Activated CD4-positive, alpha-beta T cell treated with anti-CD3 and anti-CD28 coated beads for 36 hours (primary cell): ENCODE measurements at regions of chr2 and their contacts with region 1.

Region 1: GRCh38 chr2:101998896-101999789 is 7.4 kb downstream of the IL1R2 start:
- DNase-seq: peak; percentile 69
- ATAC-seq: peak; percentile 70
- H3K4me3 Mint-ChIP-seq: peak overlapping the region; percentile 64
- H3K27ac Mint-ChIP-seq: peak overlapping the region; percentile 90
- H3K4me1 Mint-ChIP-seq: peaks cover 40% of the 10 kb centered on the region
- H3K27me3 Mint-ChIP-seq: peaks cover 3% of the 10 kb centered on the region

Region 2: GRCh38 chr2:101308432-101309210 is 690.5 kb before region 1 on chr2 and contains the start of gene RNF149:
- CTCF ChIA-PET with region 1: no interaction called
- POLR2A ChIA-PET with region 1: no interaction called
- intact Hi-C with region 1: loop called in 1 of 2 experiments (anchors 1 kb)
- DNase-seq: peak; percentile 94
- ATAC-seq: peak; percentile 63
- H3K4me3 Mint-ChIP-seq: peak within 1 kb of the TSS; percentile 82
- H3K27ac Mint-ChIP-seq: peak within 1 kb of the TSS; percentile 98
- H3K4me1 Mint-ChIP-seq: peaks cover 67% of the 10 kb centered on the region
- H3K27me3 Mint-ChIP-seq: no peaks in the 10 kb centered on the region
- total RNA-seq, gene RNF149: 23.4 to 29.5 TPM

Region 3: DNA sequence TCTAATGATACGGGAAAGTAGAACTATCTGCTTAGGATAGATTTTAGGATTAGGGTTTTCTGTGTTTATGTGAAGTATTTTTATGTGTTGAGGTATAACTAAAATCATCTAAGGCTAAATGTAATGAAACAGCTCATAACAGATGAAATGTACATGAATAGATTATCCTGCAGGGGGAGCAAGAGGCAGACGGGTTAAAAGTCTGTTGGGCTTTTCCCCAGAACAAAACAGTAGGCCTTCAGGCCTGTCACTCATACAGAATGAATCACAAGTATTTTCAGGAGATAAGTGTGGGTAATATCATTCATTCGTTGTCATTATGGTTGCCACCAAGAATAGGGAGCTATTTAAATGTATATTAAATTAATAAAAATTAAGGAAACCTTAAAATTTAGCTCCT is 115.3 kb before region 1 on chr2:
- CTCF ChIA-PET with region 1: interaction called, 34 read pairs
- POLR2A ChIA-PET with region 1: interaction called, 3 read pairs
- intact Hi-C with region 1: loop called (anchors 1 to 5 kb)
- DNase-seq: peak; percentile 67
- ATAC-seq: peak; percentile 90
- H3K4me3 Mint-ChIP-seq: no peak overlapping the region
- H3K27ac Mint-ChIP-seq: peak overlapping the region; percentile 12
- H3K4me1 Mint-ChIP-seq: peaks cover 18% of the 10 kb centered on the region
- H3K27me3 Mint-ChIP-seq: no peaks in the 10 kb centered on the region

Region 4: DNA sequence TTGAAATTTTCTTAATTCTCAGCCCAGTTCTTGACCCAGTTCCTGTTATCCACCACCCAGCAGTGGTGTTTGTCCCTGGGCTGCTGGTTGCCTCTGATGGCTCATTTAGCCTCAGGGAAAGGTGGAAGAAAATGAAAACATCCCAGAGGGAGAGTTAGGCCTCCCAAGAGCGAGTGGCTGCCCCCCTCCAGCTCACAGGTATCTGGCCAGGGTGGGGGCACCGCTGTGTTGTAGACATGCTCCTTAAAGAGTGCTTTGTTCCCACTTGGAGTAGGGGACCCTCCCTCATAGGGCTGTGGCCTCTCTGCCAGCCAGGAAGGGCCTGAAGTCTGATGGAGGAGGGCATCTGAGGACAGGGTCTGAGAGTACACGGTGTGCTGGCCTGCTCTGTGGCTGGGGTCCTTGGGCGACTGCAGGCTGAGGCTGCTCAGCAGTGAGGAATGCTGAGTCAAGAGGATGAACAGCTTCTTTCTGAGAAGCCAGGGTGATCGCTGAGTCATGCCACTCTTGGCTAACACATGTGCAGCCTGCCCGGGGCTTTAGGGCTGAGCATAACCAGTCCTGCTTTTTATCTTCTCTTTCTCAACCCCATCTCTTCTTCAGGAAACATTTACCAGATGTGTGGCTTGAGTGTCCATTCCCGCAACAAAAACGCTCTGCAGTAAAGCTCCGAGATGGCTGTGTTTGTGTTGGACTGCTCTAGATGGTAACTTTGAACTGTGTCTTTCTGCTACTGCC is 65.0 kb after region 1 on chr2:
- CTCF ChIA-PET with region 1: interaction called, 3 read pairs
- POLR2A ChIA-PET with region 1: interaction called, 25 read pairs
- intact Hi-C with region 1: loop called (anchors 1 kb)
- DNase-seq: peak; percentile 77
- ATAC-seq: peak; percentile 35
- H3K4me3 Mint-ChIP-seq: no peak overlapping the region
- H3K27ac Mint-ChIP-seq: peak overlapping the region; percentile 86
- H3K4me1 Mint-ChIP-seq: peaks cover 38% of the 10 kb centered on the region
- H3K27me3 Mint-ChIP-seq: no peaks in the 10 kb centered on the region

Region 5: GRCh38 chr2:102138331-102138730 is 139.2 kb after region 1 on chr2:
- CTCF ChIA-PET with region 1: interaction called, 3 read pairs
- POLR2A ChIA-PET with region 1: interaction called, 5 read pairs
- intact Hi-C with region 1: loop called (anchors 1 kb)
- DNase-seq: no peak
- ATAC-seq: peak; percentile 7
- H3K4me3 Mint-ChIP-seq: peak overlapping the region; percentile 7
- H3K27ac Mint-ChIP-seq: peak overlapping the region; percentile 89
- H3K4me1 Mint-ChIP-seq: peaks cover 64% of the 10 kb centered on the region
- H3K27me3 Mint-ChIP-seq: peaks cover 23% of the 10 kb centered on the region

Region 6: DNA sequence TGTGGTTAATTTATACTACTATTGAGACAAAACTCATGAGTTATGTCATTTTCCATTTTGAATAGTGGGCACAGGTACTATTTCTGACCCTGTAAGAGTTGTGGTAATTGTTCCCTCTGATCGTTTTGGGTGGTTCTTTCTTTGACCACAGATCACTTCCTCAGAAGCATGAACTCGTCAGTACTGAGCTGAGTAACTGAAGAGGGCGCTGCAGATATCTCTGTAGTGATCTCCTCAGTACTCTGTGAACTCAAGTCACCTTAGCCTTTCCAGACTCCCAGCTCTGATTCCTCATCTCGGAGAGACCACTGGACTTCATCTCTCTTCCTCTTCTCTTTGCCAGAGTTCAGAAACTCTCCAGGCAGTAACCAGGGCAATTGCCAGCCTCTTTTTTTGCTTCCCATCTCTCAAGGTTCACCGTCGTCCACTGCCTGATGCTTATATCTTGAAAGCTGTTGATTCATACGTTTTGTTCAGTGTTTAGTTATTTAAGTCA is 302.8 kb after region 1 on chr2:
- CTCF ChIA-PET with region 1: interaction called, 4 read pairs
- POLR2A ChIA-PET with region 1: no interaction called
- intact Hi-C with region 1: loop called in 1 of 2 experiments (anchors 2 kb)
- DNase-seq: peak; percentile 66
- ATAC-seq: peak; percentile 88
- H3K4me3 Mint-ChIP-seq: peak overlapping the region; percentile 17
- H3K27ac Mint-ChIP-seq: peak overlapping the region; percentile 58
- H3K4me1 Mint-ChIP-seq: peaks cover 46% of the 10 kb centered on the region
- H3K27me3 Mint-ChIP-seq: peaks cover 3% of the 10 kb centered on the region

Region 7: DNA sequence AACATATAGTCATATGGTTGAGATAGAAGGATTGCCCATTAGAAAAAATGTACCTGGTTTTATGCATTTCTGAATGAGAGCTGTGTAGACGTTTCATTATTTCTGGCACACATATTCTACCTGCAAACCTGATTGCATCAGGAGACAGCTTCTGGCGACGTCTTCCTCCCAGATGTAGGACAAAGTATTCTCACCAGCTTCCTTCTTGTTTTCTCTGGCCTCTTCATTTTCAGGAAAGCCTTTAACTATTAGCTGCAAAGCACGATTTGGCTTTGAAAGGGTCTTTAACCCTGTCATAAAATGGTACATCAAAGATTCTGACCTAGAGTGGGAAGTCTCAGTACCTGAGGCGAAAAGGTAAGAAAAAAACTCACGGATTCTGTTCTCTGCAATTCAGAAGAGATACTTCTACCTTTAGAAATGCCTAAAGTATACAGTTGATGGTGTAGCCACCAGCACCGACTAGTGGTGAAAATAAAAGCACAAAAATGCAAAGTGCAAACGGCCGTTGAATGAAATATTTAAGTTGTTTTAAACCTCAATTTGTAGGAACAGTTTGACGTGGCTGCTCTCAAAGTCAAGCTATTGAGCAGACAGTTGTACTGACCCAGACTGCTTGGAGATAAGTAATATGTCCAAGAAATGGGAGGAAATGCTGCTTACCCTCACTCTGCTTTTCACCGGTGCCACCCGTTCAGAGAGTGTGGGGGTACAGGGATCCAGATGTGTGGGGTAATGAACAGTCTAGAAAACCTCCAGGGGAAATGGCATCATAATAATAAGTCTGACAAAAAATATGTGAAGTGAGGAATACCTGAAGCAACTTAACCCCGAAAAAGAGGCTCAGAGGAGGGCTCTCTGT is 444.1 kb after region 1 on chr2:
- CTCF ChIA-PET with region 1: interaction called, 3 read pairs
- POLR2A ChIA-PET with region 1: no interaction called
- intact Hi-C with region 1: loop called in 1 of 2 experiments (anchors 5 kb)
- DNase-seq: peak; percentile 65
- ATAC-seq: peak; percentile 84
- H3K4me3 Mint-ChIP-seq: no peak overlapping the region
- H3K27ac Mint-ChIP-seq: peak overlapping the region; percentile 56
- H3K4me1 Mint-ChIP-seq: peaks cover 11% of the 10 kb centered on the region
- H3K27me3 Mint-ChIP-seq: no peaks in the 10 kb centered on the region